ENCODE measurements at regions of chr1 and their contacts with region 1.

Region 1: DNA sequence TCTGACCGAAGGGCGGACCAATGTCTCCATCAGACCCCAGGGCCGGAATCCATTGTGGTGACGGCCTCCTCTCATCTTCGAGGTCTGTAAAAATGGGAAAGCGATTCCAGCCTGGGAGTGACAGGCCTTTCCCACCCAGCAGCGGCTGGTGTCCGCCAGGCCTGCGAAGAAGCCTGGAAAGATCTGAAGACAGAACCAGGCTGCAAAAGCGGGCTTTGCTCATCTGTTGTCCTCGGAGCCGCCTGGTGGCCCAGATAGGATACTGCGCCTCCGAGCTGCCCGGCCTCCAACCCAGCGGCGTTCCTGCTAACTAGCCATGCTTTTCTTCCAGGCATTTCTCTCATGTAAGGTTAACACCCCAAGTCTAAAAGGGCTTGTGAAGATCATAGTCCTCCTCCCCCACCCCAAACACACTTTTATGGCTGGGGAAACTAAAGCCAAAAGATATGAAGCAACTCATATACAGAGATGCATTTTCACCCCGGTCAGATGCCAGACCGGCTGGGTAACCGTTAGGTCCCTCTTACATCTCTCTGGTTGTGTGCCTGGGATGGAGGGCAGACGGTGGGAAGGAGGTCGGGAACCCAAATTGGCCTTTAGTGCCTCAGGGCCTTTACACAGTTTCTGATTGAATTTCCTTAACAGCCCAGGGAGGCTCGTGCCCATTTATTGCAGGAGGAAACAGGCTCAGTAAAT is 1.9 kb upstream of the DHRS3 start:
- DNase-seq: peak; percentile 82
- H3K4me3 Mint-ChIP-seq: peak overlapping the region; percentile 96
- H3K27ac Mint-ChIP-seq: no peak overlapping the region
- H3K4me1 Mint-ChIP-seq: peaks cover 56% of the 10 kb centered on the region
- H3K27me3 Mint-ChIP-seq: peaks cover 14% of the 10 kb centered on the region

Region 2: DNA sequence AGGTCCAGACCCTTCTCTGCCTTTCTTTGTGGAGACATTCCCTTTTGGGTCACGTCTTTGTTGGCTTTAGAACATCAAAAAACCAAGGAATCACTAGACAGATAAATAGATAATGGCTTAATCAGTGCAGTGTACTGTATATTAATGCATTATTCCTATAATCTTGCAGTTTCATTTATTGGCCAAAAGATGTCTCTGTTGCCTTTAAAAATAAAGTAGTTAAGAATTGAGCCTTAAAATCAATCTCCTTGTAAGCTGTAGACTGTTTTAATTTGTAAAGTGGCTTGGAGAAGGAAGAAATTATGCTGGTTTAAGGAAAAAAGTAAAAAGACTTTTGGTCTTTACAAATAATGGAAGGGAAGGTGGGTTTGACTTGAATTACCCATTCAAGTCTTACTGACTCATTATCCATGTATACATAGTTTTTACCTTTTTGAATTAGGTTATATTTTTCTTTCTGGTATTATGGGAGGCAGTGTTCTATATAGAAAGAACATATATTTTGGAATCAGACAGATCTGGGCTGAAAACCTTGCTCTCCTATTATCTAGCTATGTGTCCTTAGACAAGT is 305.5 kb before region 1 on chr1:
- CTCF ChIA-PET with region 1: interaction called, 77 read pairs
- POLR2A ChIA-PET with region 1: interaction called, 14 read pairs
- DNase-seq: no peak
- H3K4me3 Mint-ChIP-seq: no peak overlapping the region
- H3K27ac Mint-ChIP-seq: no peak overlapping the region
- H3K4me1 Mint-ChIP-seq: no peaks in the 10 kb centered on the region
- H3K27me3 Mint-ChIP-seq: no peaks in the 10 kb centered on the region

Region 3: GRCh38 chr1:12386130-12386529 is 233.8 kb before region 1 on chr1:
- CTCF ChIA-PET with region 1: interaction called, 3 read pairs
- POLR2A ChIA-PET with region 1: interaction called, 20 read pairs
- DNase-seq: no peak
- H3K4me3 Mint-ChIP-seq: no peak overlapping the region
- H3K27ac Mint-ChIP-seq: peak overlapping the region; percentile 73
- H3K4me1 Mint-ChIP-seq: peaks cover 52% of the 10 kb centered on the region
- H3K27me3 Mint-ChIP-seq: no peaks in the 10 kb centered on the region

Region 4: DNA sequence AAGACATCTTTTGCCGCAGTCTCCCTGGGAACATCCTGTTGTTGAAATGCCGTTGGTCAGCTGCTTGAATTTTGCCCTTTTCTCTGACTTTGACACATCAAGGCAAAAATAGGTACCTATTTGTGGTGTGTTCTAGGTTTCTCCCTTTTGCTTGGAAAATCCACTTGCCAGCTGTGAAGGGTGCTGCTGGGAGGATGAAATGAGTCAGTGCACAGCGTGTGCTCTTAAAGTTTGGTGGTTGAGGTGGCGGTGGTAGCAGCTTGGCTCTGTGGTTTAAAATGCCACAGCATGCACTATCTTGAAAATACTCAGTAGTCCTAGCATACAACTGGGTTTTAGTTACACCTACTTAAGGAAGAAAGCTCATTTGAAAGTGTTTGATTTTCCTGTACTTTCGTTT is 185.8 kb before region 1 on chr1:
- CTCF ChIA-PET with region 1: interaction called, 3 read pairs
- POLR2A ChIA-PET with region 1: interaction called, 10 read pairs
- DNase-seq: peak; percentile 81
- H3K4me3 Mint-ChIP-seq: peak overlapping the region; percentile 42
- H3K27ac Mint-ChIP-seq: peak overlapping the region; percentile 67
- H3K4me1 Mint-ChIP-seq: peaks cover 63% of the 10 kb centered on the region
- H3K27me3 Mint-ChIP-seq: peaks cover 2% of the 10 kb centered on the region

Region 5: GRCh38 chr1:12499539-12500240 is 120.2 kb before region 1 on chr1:
- CTCF ChIA-PET with region 1: no interaction called
- POLR2A ChIA-PET with region 1: no interaction called
- DNase-seq: no peak
- H3K4me3 Mint-ChIP-seq: no peak overlapping the region
- H3K27ac Mint-ChIP-seq: no peak overlapping the region
- H3K4me1 Mint-ChIP-seq: peaks cover 20% of the 10 kb centered on the region
- H3K27me3 Mint-ChIP-seq: no peaks in the 10 kb centered on the region

Region 6: GRCh38 chr1:12604114-12604874 is 15.6 kb before region 1 on chr1:
- CTCF ChIA-PET with region 1: interaction called, 17 read pairs
- POLR2A ChIA-PET with region 1: interaction called, 53 read pairs
- DNase-seq: peak; percentile 83
- H3K4me3 Mint-ChIP-seq: no peak overlapping the region
- H3K27ac Mint-ChIP-seq: peak overlapping the region; percentile 24
- H3K4me1 Mint-ChIP-seq: peaks cover 27% of the 10 kb centered on the region
- H3K27me3 Mint-ChIP-seq: peaks cover 4% of the 10 kb centered on the region

Region 7: GRCh38 chr1:12640237-12640957 is 20.5 kb after region 1 on chr1:
- CTCF ChIA-PET with region 1: no interaction called
- POLR2A ChIA-PET with region 1: no interaction called
- DNase-seq: no peak
- H3K4me3 Mint-ChIP-seq: no peak overlapping the region
- H3K27ac Mint-ChIP-seq: no peak overlapping the region
- H3K4me1 Mint-ChIP-seq: no peaks in the 10 kb centered on the region
- H3K27me3 Mint-ChIP-seq: no peaks in the 10 kb centered on the region